Esophagus squamous epithelium (tissue), 5 donors: ENCODE measurements at regions of chr7 and their contacts with region 1.

Region 1: GRCh38 chr7:117385340-117386109 is 41.8 kb downstream of the ASZ1 start:
- DNase-seq: no peak
- H3K4me3 ChIP-seq: no peak overlapping the region
- H3K27ac ChIP-seq: no peak overlapping the region
- H3K4me1 ChIP-seq: no peaks in the 10 kb centered on the region
- H3K27me3 ChIP-seq: no peaks in the 10 kb centered on the region
- CTCF ChIP-seq: peak in 4 of 6 experiments; percentile 20 to 51 (median 26)
- POLR2A ChIP-seq: no peak

Region 2: DNA sequence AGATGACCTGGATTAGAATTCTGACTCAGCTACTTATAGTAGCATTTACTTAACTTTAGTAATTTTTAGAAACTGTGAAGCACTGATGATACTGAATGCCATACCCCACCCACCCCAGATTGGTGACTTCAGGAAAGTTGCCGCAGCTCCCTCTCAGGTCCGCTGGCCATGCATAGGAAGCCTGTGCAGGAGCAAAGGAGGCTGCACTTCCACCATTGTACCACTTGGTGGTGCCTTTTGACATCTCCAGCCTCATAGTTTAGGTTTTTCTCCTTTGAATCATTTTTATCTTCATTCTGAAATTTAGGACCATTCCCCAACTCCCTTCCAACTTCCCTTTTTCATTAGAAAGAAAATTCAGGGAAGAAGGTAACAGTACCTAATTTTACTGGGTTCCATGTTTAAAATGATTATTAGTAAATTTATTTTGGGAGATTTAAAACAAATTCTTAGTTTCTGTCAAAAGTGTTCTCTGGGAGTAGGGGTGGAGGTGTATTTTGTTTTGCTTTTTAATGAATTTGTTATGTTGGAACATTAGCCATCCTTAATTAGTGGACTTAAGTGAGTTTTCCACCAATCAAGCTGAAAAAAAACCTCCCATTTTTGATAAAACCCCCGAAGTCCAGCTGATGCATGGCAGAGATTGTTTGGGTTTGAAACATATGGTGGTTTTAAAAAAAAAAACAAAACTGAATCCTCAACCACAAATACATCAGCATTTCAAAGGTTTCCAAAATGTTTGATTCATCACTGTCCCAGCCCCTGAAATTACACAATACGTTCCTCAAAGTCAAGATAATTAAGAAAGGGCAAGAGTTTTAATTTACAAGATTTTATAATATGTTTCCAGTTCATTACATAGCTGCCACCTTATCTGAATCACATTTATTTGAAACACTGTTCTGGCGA is 172.3 kb before region 1 on chr7:
- intact Hi-C with region 1: loop called (anchors 10 kb)
- DNase-seq: no peak
- H3K4me3 ChIP-seq: no peak overlapping the region
- H3K27ac ChIP-seq: no peak overlapping the region
- H3K4me1 ChIP-seq: no peaks in the 10 kb centered on the region
- H3K27me3 ChIP-seq: no peaks in the 10 kb centered on the region
- CTCF ChIP-seq: peak; percentile 63 to 89 (median 82)
- POLR2A ChIP-seq: no peak